ENCODE measurements at regions of chr10 and their contacts with region 1.

Region 1: GRCh38 chr10:97731346-97732051 is 5.4 kb upstream of the ZFYVE27 start:
- DNase-seq: peak in 1 of 2 donors; percentile 83
- ATAC-seq: peak; percentile 65 to 87 (median 79)
- H3K4me3 ChIP-seq: no peak overlapping the region
- H3K4me3 Mint-ChIP-seq: no peak overlapping the region
- H3K27ac ChIP-seq: no peak overlapping the region
- H3K27ac Mint-ChIP-seq: no peak overlapping the region
- H3K4me1 ChIP-seq: peaks cover 4% of the 10 kb centered on the region
- H3K4me1 Mint-ChIP-seq: peaks cover 6 to 11% of the 10 kb centered on the region in 2 donors
- H3K27me3 ChIP-seq: no peaks in the 10 kb centered on the region
- H3K27me3 Mint-ChIP-seq: peaks cover 0 to 9% of the 10 kb centered on the region in 2 donors
- CTCF ChIP-seq: peak; percentile 67

Region 2: GRCh38 chr10:97318772-97319651 is 412.5 kb before region 1 on chr10 and contains the start of gene FRAT1:
- intact Hi-C with region 1: no loop called
- DNase-seq: peak; percentile 93 to 95
- ATAC-seq: peak; percentile 77 to 89 (median 79)
- H3K4me3 ChIP-seq: peak within 1 kb of the TSS; percentile 64
- H3K4me3 Mint-ChIP-seq: peak within 1 kb of the TSS; percentile 98
- H3K27ac ChIP-seq: peak within 1 kb of the TSS; percentile 100
- H3K27ac Mint-ChIP-seq: peak within 1 kb of the TSS; percentile 92 to 99
- H3K4me1 ChIP-seq: peaks cover 33% of the 10 kb centered on the region
- H3K4me1 Mint-ChIP-seq: peaks cover 33% of the 10 kb centered on the region in 2 donors
- H3K27me3 ChIP-seq: no peaks in the 10 kb centered on the region
- H3K27me3 Mint-ChIP-seq: no peaks in the 10 kb centered on the region
- CTCF ChIP-seq: no peak
- total RNA-seq, gene FRAT1: 26.0 to 45.0 (median 32.1) TPM

Region 3: GRCh38 chr10:97572214-97572989 is 159.1 kb before region 1 on chr10 and contains the start of gene ANKRD2:
- intact Hi-C with region 1: loop called (anchors 1 kb)
- DNase-seq: peak; percentile 64 to 69
- ATAC-seq: peak; percentile 79 to 98 (median 93)
- H3K4me3 ChIP-seq: no peak within 1 kb of the TSS
- H3K4me3 Mint-ChIP-seq: no peak within 1 kb of the TSS
- H3K27ac ChIP-seq: no peak within 1 kb of the TSS
- H3K27ac Mint-ChIP-seq: no peak within 1 kb of the TSS
- H3K4me1 ChIP-seq: peaks cover 4% of the 10 kb centered on the region
- H3K4me1 Mint-ChIP-seq: no peaks in the 10 kb centered on the region
- H3K27me3 ChIP-seq: no peaks in the 10 kb centered on the region
- H3K27me3 Mint-ChIP-seq: no peaks in the 10 kb centered on the region
- CTCF ChIP-seq: peak; percentile 81
- total RNA-seq, gene ANKRD2: not detected

Region 4: DNA sequence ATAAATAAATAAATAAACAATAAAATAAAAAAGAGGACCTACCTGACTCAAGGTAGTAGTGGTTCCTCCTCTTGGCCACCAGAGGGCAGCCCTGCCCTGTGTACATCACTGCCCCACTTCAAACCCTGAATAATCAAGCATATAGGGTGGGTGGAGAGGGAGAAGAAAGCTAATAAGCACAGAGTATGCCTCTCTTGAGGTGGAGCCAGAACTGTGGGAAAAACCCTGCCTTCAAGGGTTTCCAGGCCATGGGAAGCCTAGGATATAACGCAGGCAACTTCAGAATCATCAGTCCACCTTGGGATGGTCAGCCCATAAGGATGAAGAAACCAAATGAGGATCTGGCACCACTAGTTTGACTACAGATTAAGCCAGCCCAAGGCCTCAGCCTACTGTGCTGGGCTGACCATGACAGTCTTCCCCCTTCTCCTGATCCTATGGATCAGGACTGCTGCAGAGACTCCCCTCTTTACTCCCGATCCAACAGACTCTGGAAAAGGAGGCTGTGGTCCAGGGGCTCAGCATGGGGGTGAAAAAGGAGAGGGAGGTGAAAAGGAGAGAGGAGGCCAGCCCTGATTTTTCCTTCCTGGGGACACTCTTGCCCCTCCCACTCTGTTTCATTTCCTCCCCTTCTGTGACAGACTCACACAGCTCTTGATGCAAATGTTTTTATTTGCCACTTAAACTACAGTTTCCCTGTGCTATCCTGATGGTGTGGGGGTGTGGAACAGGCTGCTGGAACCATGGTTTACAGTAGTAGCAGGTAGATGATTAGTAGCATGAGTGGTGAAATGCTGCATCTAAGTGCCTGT is 54.5 kb before region 1 on chr10:
- intact Hi-C with region 1: loop called (anchors 1 kb)
- DNase-seq: peak; percentile 36 to 84
- ATAC-seq: peak; percentile 79 to 91 (median 85)
- H3K4me3 ChIP-seq: no peak overlapping the region
- H3K4me3 Mint-ChIP-seq: peak overlapping the region; percentile 13
- H3K27ac ChIP-seq: no peak overlapping the region
- H3K27ac Mint-ChIP-seq: peak overlapping the region; percentile 42 to 66
- H3K4me1 ChIP-seq: peaks cover 6% of the 10 kb centered on the region
- H3K4me1 Mint-ChIP-seq: no peaks in the 10 kb centered on the region
- H3K27me3 ChIP-seq: no peaks in the 10 kb centered on the region
- H3K27me3 Mint-ChIP-seq: no peaks in the 10 kb centered on the region
- CTCF ChIP-seq: peak; percentile 92

Region 5: GRCh38 chr10:97701438-97702069 is 29.9 kb before region 1 on chr10:
- intact Hi-C with region 1: loop called (anchors 1 kb)
- DNase-seq: peak in 1 of 2 donors; percentile 81
- ATAC-seq: peak; percentile 88 to 97 (median 97)
- H3K4me3 ChIP-seq: no peak overlapping the region
- H3K4me3 Mint-ChIP-seq: no peak overlapping the region
- H3K27ac ChIP-seq: no peak overlapping the region
- H3K27ac Mint-ChIP-seq: no peak overlapping the region
- H3K4me1 ChIP-seq: peaks cover 3% of the 10 kb centered on the region
- H3K4me1 Mint-ChIP-seq: peaks cover 6 to 7% of the 10 kb centered on the region in 2 donors
- H3K27me3 ChIP-seq: no peaks in the 10 kb centered on the region
- H3K27me3 Mint-ChIP-seq: peaks cover 0 to 5% of the 10 kb centered on the region in 2 donors
- CTCF ChIP-seq: peak; percentile 73

Region 6: DNA sequence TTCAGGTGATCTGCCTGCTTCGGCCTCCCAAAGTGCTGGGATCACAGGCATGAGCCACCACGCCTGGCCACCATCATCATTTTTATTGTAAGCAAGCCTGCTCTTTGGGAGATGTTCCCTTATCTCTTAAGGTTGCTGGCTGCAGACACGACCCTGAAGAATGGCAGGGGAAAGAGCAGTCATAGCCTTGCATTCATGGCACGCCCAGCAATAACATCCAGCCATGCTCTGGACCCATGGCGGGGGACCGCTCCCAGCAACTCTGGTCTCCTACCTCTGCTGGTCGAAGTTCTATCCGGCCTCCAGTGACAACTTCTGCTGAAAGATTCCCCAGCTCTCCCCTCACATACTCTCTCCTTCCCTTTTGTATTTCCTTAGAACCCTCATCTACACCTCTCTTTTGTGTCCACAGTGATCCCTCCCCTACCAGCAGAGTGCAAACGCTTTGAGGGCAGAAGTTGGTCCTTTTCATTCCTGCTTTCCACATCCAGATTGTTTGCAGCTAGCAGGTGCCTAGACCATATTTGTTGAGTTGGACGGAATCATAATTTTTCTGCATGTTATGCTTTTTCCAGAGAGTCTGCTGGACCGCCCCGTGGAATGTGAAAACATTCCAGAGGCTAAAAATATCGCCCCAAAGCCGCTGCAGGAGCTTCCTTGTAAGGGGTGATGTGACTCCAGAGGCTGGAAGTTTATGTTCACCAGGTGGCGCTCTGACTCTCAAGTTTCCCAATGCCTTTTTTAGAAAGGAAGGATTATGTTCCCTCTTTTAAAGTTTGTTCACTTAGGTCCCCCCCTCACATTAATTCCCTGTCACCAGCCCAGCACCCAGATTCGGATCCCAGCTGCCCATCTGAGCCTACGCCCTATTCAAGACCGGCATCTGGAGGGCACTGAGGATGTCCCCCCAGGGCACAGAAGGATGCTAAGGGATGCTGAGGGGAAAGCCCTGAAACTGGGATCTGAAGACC is 22.2 kb before region 1 on chr10:
- intact Hi-C with region 1: loop called (anchors 1 kb)
- DNase-seq: peak in 1 of 2 donors; percentile 70
- ATAC-seq: no peak
- H3K4me3 ChIP-seq: no peak overlapping the region
- H3K4me3 Mint-ChIP-seq: no peak overlapping the region
- H3K27ac ChIP-seq: no peak overlapping the region
- H3K27ac Mint-ChIP-seq: no peak overlapping the region
- H3K4me1 ChIP-seq: peaks cover 12% of the 10 kb centered on the region
- H3K4me1 Mint-ChIP-seq: peaks cover 12 to 21% of the 10 kb centered on the region in 2 donors
- H3K27me3 ChIP-seq: peaks cover 3% of the 10 kb centered on the region
- H3K27me3 Mint-ChIP-seq: peaks cover 29 to 30% of the 10 kb centered on the region in 2 donors
- CTCF ChIP-seq: peak; percentile 39

Region 7: GRCh38 chr10:97849687-97850402 is 118.3 kb after region 1 on chr10 and contains the start of gene GOLGA7B:
- intact Hi-C with region 1: no loop called
- DNase-seq: peak; percentile 58 to 78
- ATAC-seq: peak; percentile 87 to 91 (median 88)
- H3K4me3 ChIP-seq: peak within 1 kb of the TSS; percentile 61
- H3K4me3 Mint-ChIP-seq: peak within 1 kb of the TSS; percentile 94
- H3K27ac ChIP-seq: no peak within 1 kb of the TSS
- H3K27ac Mint-ChIP-seq: peak within 1 kb of the TSS; percentile 53 to 85
- H3K4me1 ChIP-seq: peaks cover 24% of the 10 kb centered on the region
- H3K4me1 Mint-ChIP-seq: peaks cover 19 to 32% of the 10 kb centered on the region in 2 donors
- H3K27me3 ChIP-seq: peaks cover 6% of the 10 kb centered on the region
- H3K27me3 Mint-ChIP-seq: peaks cover 3 to 6% of the 10 kb centered on the region in 2 donors
- CTCF ChIP-seq: no peak
- total RNA-seq, gene GOLGA7B: 4.1 to 4.6 (median 4.1) TPM